Activated CD8-positive, alpha-beta T cell treated with anti-CD3 and anti-CD28 coated beads, Interleukin-2, amount 10 ng/mL, durations not matched to agents 7 days and 5 days (primary cell): ENCODE measurements at regions of chr2 and their contacts with region 1.

Region 1: DNA sequence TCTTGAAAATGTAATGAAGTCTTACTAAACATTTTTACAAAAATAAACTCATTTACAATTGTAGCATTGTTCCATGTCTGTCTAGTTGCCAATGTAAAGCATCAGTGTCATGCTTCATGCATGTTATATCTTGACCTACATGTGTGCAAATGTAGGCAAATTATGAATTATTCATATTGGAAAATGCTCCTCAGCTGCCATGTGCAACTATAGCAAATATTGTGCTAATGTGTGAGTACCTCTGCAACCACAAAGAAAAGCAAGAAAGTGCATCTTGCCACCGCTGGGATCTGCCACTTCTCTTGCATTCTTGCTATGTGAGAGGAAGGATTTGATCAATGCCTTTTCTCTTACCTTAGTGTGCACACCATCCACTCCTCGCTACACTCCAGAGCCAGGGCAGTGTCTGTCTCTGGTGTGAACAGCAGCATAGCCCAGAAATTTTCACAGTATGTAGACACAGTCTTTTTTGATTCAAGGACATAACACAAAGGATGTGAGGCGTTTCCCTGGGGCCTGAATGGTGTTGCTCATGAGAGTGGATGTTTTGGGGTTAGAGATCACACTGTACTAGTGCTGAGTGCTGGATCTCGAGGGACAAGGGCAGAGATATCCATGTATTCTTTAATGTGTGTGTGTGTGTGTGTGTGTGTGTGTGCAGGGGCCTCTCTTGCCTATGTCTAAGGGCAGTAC is 47.6 kb upstream of the HAAO start:
- DNase-seq: no peak
- ATAC-seq: no peak
- H3K4me3 Mint-ChIP-seq: no peak overlapping the region
- H3K27ac Mint-ChIP-seq: no peak overlapping the region
- H3K4me1 Mint-ChIP-seq: no peaks in the 10 kb centered on the region
- H3K27me3 Mint-ChIP-seq: peaks cover 2% of the 10 kb centered on the region

Region 2: DNA sequence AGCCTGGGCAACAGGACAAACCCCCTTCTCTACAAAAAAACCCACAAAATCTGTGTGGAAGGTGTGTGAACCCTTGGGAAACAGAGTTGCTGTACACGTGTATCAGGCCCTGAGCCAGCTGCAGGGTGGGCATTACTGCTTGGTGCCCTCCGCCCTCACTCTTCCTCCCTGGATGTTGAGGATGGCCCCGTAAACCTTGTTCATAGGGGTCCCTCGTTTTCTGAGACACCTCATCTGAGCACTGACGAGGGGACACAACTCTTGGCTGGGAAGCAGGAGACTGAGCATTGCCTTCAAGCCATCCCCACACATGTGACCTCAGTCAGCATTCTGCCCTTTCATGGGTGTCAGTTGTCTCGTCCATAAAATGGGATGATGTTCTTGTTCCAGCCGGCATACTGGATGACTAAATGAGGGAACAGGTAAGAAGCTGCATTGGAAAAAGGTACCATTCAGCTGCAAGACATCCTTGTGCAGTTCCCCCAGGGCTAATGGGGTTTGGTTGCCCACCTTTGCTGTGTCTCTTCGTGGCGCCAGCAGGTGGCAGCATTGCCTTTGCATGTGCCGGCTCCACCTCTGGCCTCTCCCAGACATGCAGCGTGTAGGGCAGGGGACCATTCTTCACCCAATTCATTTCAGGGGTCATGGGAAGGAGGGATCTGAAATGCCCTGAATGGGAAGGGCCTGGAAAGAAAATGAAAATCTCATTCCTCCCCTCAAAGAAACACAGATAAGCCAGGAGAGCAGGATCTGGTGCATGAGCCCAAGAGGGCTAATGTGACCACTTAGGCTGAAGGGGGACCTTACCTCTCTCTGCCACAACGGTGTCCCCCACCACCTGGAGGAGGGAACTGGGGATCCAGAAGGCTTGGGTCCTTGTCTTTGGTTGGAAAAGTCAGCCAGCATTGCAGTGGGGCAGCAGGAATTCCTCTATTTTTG is 11.2 kb before region 1 on chr2:
- CTCF ChIA-PET with region 1: interaction called, 12 read pairs
- POLR2A ChIA-PET with region 1: interaction called, 3 read pairs
- DNase-seq: peak; percentile 80
- ATAC-seq: peak; percentile 93
- H3K4me3 Mint-ChIP-seq: no peak overlapping the region
- H3K27ac Mint-ChIP-seq: no peak overlapping the region
- H3K4me1 Mint-ChIP-seq: peaks cover 12% of the 10 kb centered on the region
- H3K27me3 Mint-ChIP-seq: peaks cover 9% of the 10 kb centered on the region